ENCODE measurements at regions of chr11 and their contacts with region 1.

Region 1: DNA sequence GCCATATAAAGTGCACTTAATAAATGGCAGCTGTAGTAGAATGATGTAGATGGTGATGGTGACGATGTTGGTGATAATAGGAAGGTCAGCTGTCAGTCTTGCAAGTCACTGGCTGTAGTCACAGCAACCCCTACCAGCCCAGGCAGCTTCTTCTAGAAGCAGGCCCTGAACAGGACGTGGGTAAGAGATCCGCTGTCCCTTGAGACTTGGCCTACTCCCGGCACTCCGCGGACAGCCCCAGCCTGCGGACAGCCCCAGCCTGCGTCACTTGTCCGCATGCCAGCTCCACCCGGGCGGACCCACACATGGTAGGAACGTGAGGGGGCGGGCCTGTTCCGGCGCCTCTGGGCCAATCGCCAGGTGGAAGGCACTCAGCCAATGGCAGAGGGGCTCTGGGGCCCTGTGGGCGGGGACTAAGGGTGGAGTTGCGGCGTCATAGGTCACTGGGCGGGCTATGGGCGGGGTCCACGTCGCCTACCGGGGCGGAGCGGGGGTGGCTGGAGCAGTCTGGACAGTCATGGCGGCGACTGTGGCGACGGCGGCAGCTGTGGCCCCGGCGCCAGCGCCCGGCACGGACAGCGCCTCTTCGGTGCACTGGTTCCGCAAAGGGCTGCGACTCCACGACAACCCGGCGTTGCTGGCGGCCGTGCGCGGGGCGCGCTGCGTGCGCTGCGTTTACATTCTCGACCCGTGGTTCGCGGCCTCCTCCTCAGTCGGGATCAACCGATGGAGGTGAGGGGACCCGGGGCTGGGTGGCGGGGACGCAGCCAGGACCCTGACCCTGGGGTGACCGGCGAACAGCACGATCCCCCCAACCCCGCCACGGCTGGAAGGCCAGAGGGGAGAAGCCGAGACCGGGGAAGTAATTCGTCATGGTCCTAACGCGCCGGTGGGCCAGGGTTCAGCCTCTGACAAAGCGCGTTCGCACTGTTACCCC is at the start of gene CRY2:
- DNase-seq: peak; percentile 99
- CTCF ChIP-seq: no peak

Region 2: GRCh38 chr11:45798793-45799441 is 48.3 kb before region 1 on chr11:
- CTCF ChIA-PET with region 1: no interaction called
- POLR2A ChIA-PET with region 1: no interaction called
- DNase-seq: no peak
- CTCF ChIP-seq: no peak

Region 3: GRCh38 chr11:45815449-45816146 is 31.6 kb before region 1 on chr11:
- CTCF ChIA-PET with region 1: interaction called, 25 read pairs
- POLR2A ChIA-PET with region 1: no interaction called
- DNase-seq: no peak
- CTCF ChIP-seq: no peak

Region 4: GRCh38 chr11:45825261-45825660 is 22.0 kb before region 1 on chr11:
- CTCF ChIA-PET with region 1: interaction called, 66 read pairs
- POLR2A ChIA-PET with region 1: interaction called, 5 read pairs
- DNase-seq: no peak
- CTCF ChIP-seq: no peak

Region 5: DNA sequence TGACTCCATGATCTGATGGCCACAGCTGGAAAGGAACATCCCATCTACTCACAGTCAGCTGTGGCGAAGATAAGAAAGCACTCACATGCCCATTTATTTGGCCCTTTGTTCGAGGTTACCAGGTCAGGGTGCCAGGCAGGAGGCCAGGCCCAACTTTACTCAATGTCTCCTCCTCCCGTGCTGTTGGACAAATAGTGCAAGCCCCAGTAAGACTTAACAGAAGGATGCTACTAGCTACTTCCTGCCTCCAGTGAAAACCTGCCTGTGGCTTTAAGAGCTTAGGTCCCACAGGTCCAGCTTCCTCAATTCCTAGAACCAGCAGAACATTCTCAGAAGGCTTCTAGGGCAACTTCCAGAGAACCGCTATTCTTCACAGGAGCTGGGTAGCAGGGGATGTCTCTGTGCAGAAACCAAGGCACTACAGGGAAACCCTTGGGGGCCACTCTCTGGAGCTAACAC is 12.9 kb before region 1 on chr11:
- CTCF ChIA-PET with region 1: interaction called, 66 read pairs
- POLR2A ChIA-PET with region 1: no interaction called
- DNase-seq: no peak
- CTCF ChIP-seq: no peak

Region 6: DNA sequence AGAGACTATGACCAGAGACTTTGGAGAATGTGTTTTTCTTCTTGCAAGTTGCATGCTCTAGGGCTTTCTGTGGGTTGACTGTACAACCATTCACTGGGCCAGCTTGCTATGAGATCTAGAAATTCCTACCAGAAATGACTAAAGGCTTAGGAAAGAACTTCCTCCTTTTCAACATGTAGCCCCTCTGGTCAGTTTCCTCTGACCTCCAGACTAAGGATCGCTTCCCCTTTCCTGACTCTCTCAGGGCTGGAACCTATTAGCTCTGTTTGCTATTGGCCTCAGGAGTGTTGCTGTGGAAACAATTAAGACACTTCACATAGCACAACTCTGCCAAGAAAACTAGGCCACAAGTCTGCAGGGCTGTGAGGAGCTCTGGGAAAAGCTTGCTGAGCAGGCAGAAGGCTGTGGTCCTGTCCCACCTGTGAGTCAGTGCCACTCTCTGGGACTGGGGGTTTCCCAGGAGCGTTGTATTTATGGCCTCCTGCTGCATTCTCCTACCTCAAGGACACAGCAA is 10.8 kb after region 1 on chr11:
- CTCF ChIA-PET with region 1: interaction called, 11 read pairs
- POLR2A ChIA-PET with region 1: interaction called, 5 read pairs
- DNase-seq: no peak
- CTCF ChIP-seq: no peak